SK-N-SH (cell line): ENCODE measurements at regions of chr1 and their contacts with region 1.

Region 1: GRCh38 chr1:24586970-24587820 is 31.3 kb downstream of the NCMAP start:
- DNase-seq: peak; percentile 73
- H3K4me3 ChIP-seq: no peak overlapping the region; a peak in 1 of 4 replicates
- H3K27ac ChIP-seq: no peak overlapping the region
- H3K4me1 ChIP-seq: no peaks in the 10 kb centered on the region
- H3K27me3 ChIP-seq: no peaks in the 10 kb centered on the region
- CTCF ChIP-seq: peak; percentile 81
- EP300 ChIP-seq: no peak
- RAD21 ChIP-seq: peak; percentile 68

Region 2: GRCh38 chr1:24491577-24492360 is 95.4 kb before region 1 on chr1:
- CTCF ChIA-PET with region 1: interaction called, 10 read pairs
- POLR2A ChIA-PET with region 1: no interaction called
- DNase-seq: peak; percentile 56
- H3K4me3 ChIP-seq: peak overlapping the region; percentile 6 to 48; a peak in 3 of 4 replicates
- H3K27ac ChIP-seq: no peak overlapping the region; a peak in 1 of 4 replicates
- H3K4me1 ChIP-seq: no peaks in the 10 kb centered on the region
- H3K27me3 ChIP-seq: no peaks in the 10 kb centered on the region
- CTCF ChIP-seq: peak; percentile 38
- EP300 ChIP-seq: no peak
- RAD21 ChIP-seq: no peak

Region 3: GRCh38 chr1:24548070-24548469 is 39.1 kb before region 1 on chr1:
- CTCF ChIA-PET with region 1: interaction called, 28 read pairs
- POLR2A ChIA-PET with region 1: no interaction called
- DNase-seq: no peak
- H3K4me3 ChIP-seq: no peak overlapping the region
- H3K27ac ChIP-seq: no peak overlapping the region
- H3K4me1 ChIP-seq: peaks cover 0 to 6% of the 10 kb centered on the region in 2 experiments; a peak in 1 of 4 replicates
- H3K27me3 ChIP-seq: no peaks in the 10 kb centered on the region
- CTCF ChIP-seq: no peak
- EP300 ChIP-seq: no peak
- RAD21 ChIP-seq: no peak

Region 4: DNA sequence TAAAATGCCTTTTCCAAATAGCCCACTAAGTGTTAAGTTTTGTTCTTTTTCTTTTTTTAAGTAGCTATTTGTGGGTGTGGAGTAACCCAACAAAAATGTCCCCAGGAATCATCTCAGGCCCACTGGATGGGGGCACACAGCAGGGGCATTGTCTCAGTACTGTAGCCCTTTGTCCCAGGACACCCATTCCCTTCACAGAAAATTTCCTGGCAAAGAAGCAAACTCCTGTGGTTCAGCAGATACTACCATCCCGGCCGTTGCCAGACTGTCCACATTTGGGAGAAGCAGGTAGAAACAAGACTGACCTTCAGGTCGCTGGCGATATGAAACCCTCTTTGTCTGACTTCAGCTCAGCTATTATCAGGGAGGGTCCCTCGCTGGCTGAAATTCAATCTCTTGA is 32.2 kb after region 1 on chr1:
- CTCF ChIA-PET with region 1: interaction called, 12 read pairs
- POLR2A ChIA-PET with region 1: no interaction called
- DNase-seq: no peak
- H3K4me3 ChIP-seq: no peak overlapping the region
- H3K27ac ChIP-seq: no peak overlapping the region
- H3K4me1 ChIP-seq: no peaks in the 10 kb centered on the region
- H3K27me3 ChIP-seq: no peaks in the 10 kb centered on the region; the same call in 1 of the 2 replicates
- CTCF ChIP-seq: no peak
- EP300 ChIP-seq: no peak
- RAD21 ChIP-seq: no peak